ENCODE measurements at regions of chr12 and their contacts with region 1.

Region 1: GRCh38 chr12:97394657-97395056 is 67.9 kb upstream of the RMST start:
- DNase-seq: no peak
- ATAC-seq: no peak

Region 2: DNA sequence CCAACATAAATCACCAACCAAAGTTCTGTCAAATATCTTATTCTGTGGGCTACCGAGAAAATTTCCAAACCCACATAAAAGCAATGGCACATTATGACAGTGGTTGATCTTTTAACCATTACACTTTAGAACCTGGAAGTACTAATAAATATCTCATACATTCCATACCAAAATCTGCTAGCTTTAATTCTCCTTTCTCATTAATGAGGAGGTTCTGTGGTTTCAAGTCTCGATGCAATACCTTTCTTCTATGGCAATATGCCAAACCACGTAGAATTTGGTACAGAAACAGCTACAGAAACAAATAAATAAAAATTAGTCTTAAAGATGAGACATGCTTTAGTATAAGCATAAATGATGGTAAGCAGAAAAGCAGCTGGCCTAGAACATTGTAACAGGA is 1099.8 kb before region 1 on chr12:
- intact Hi-C with region 1: loop called (anchors 5 kb)
- DNase-seq: no peak
- ATAC-seq: no peak

Measured in sciatic nerve (tissue), 2 donors.